GM12878 (cell line): ENCODE measurements at regions of chr11 and their contacts with region 1.

Region 1: GRCh38 chr11:128472128-128473089 is 114.9 kb downstream of the ETS1 start:
- DNase-seq: peak; percentile 93
- ATAC-seq: peak; percentile 78
- H3K4me3 ChIP-seq: peak overlapping the region; percentile 41; the same call in 1 of the 2 replicates
- H3K27ac ChIP-seq: peak overlapping the region; percentile 91
- H3K4me1 ChIP-seq: peaks cover 92% of the 10 kb centered on the region
- H3K27me3 ChIP-seq: no peaks in the 10 kb centered on the region
- CTCF ChIP-seq: no peak
- EP300 ChIP-seq: peak; percentile 76 to 78; a peak in 3 of 4 replicates
- POLR2A ChIP-seq: peak; percentile 75
- RAD21 ChIP-seq: peak; percentile 25; the same call in 1 of the 2 replicates

Region 2: GRCh38 chr11:128302425-128303186 is 169.8 kb before region 1 on chr11:
- CTCF ChIA-PET with region 1: interaction called, 14 read pairs
- POLR2A ChIA-PET with region 1: interaction called, 4 read pairs
- RAD21 ChIA-PET with region 1: interaction called, 12 read pairs
- SMC1A ChIA-PET with region 1: interaction called, 31 read pairs
- in situ Hi-C with region 1: loop called (anchors 25 kb)
- intact Hi-C with region 1: loop called (anchors 2 kb)
- DNase-seq: peak; percentile 82
- ATAC-seq: peak; percentile 89
- H3K4me3 ChIP-seq: no peak overlapping the region
- H3K27ac ChIP-seq: peak overlapping the region; percentile 35; the same call in 1 of the 2 replicates
- H3K4me1 ChIP-seq: peaks cover 62% of the 10 kb centered on the region
- H3K27me3 ChIP-seq: no peaks in the 10 kb centered on the region
- CTCF ChIP-seq: 0 out of 6 replicates have a peak, but pooled peaks of 1 of the 3 experiments have one; percentile 11
- EP300 ChIP-seq: peak; percentile 6 to 8; a peak in 1 of 4 replicates
- POLR2A ChIP-seq: no peak
- RAD21 ChIP-seq: no peak

Region 3: GRCh38 chr11:128412847-128413791 is 59.3 kb before region 1 on chr11:
- CTCF ChIA-PET with region 1: interaction called, 6 read pairs
- POLR2A ChIA-PET with region 1: interaction called, 5 read pairs
- RAD21 ChIA-PET with region 1: interaction called, 49 read pairs
- SMC1A ChIA-PET with region 1: interaction called, 12 read pairs
- in situ Hi-C with region 1: no loop called
- intact Hi-C with region 1: loop called (anchors 2 kb)
- DNase-seq: peak; percentile 82
- ATAC-seq: peak; percentile 76
- H3K4me3 ChIP-seq: peak overlapping the region; percentile 47; the same call in 1 of the 2 replicates
- H3K27ac ChIP-seq: peak overlapping the region; percentile 75
- H3K4me1 ChIP-seq: peaks cover 6% of the 10 kb centered on the region
- H3K27me3 ChIP-seq: no peaks in the 10 kb centered on the region
- CTCF ChIP-seq: no peak
- EP300 ChIP-seq: peak; percentile 45 to 76; a peak in 2 of 4 replicates
- POLR2A ChIP-seq: no peak
- RAD21 ChIP-seq: no peak

Region 4: GRCh38 chr11:128482512-128483191 is 10.2 kb after region 1 on chr11:
- CTCF ChIA-PET with region 1: interaction called, 13 read pairs
- POLR2A ChIA-PET with region 1: interaction called, 32 read pairs
- RAD21 ChIA-PET with region 1: interaction called, 74 read pairs
- SMC1A ChIA-PET with region 1: interaction called, 111 read pairs
- in situ Hi-C with region 1: no loop called
- intact Hi-C with region 1: loop called (anchors 1 kb)
- DNase-seq: no peak
- ATAC-seq: peak; percentile 81
- H3K4me3 ChIP-seq: peak overlapping the region; percentile 37
- H3K27ac ChIP-seq: peak overlapping the region; percentile 97
- H3K4me1 ChIP-seq: peaks cover 42% of the 10 kb centered on the region
- H3K27me3 ChIP-seq: no peaks in the 10 kb centered on the region
- CTCF ChIP-seq: no peak
- EP300 ChIP-seq: peak in 1 of 2 experiments; percentile 44; a peak in 1 of 4 replicates
- POLR2A ChIP-seq: peak; percentile 64
- RAD21 ChIP-seq: 0 out of 2 replicates have a peak, but pooled peaks have one; percentile 1

Region 5: GRCh38 chr11:128733440-128734102 is 261.2 kb after region 1 on chr11:
- CTCF ChIA-PET with region 1: no interaction called
- POLR2A ChIA-PET with region 1: no interaction called
- RAD21 ChIA-PET with region 1: no interaction called
- SMC1A ChIA-PET with region 1: interaction called, 3 read pairs
- in situ Hi-C with region 1: no loop called
- intact Hi-C with region 1: loop called (anchors 5 kb)
- DNase-seq: no peak
- ATAC-seq: peak; percentile 55
- H3K4me3 ChIP-seq: peak overlapping the region; percentile 24; the same call in 1 of the 2 replicates
- H3K27ac ChIP-seq: peak overlapping the region; percentile 91
- H3K4me1 ChIP-seq: peaks cover 89% of the 10 kb centered on the region
- H3K27me3 ChIP-seq: no peaks in the 10 kb centered on the region
- CTCF ChIP-seq: no peak
- EP300 ChIP-seq: no peak
- POLR2A ChIP-seq: 0 out of 2 replicates have a peak, but pooled peaks have one; percentile 31
- RAD21 ChIP-seq: no peak